CD4-positive, alpha-beta T cell (primary cell): ENCODE measurements at regions of chr17 and their contacts with region 1.

Region 1: GRCh38 chr17:66715745-66716156 is 119.2 kb upstream of the CACNG5 start:
- DNase-seq: peak in 4 of 14 experiments; percentile 4 to 60 (median 58)
- ATAC-seq: peak; percentile 48
- H3K4me3 ChIP-seq: no peak overlapping the region
- H3K4me3 Mint-ChIP-seq: no peak overlapping the region
- H3K27ac ChIP-seq: no peak overlapping the region
- H3K27ac Mint-ChIP-seq: no peak overlapping the region
- H3K4me1 ChIP-seq: peaks cover 23% of the 10 kb centered on the region
- H3K4me1 Mint-ChIP-seq: peaks cover 34% of the 10 kb centered on the region
- H3K27me3 ChIP-seq: no peaks in the 10 kb centered on the region
- H3K27me3 Mint-ChIP-seq: no peaks in the 10 kb centered on the region
- CTCF ChIP-seq: peak; percentile 66

Region 2: GRCh38 chr17:66691644-66692420 is 23.9 kb before region 1 on chr17:
- CTCF ChIA-PET with region 1: no interaction called
- POLR2A ChIA-PET with region 1: no interaction called
- intact Hi-C with region 1: no loop called
- DNase-seq: peak in 1 of 14 experiments; percentile 28
- ATAC-seq: no peak
- H3K4me3 ChIP-seq: no peak overlapping the region
- H3K4me3 Mint-ChIP-seq: no peak overlapping the region
- H3K27ac ChIP-seq: no peak overlapping the region
- H3K27ac Mint-ChIP-seq: no peak overlapping the region
- H3K4me1 ChIP-seq: peaks cover 5% of the 10 kb centered on the region
- H3K4me1 Mint-ChIP-seq: peaks cover 6% of the 10 kb centered on the region
- H3K27me3 ChIP-seq: no peaks in the 10 kb centered on the region
- H3K27me3 Mint-ChIP-seq: no peaks in the 10 kb centered on the region
- CTCF ChIP-seq: no peak

Region 3: GRCh38 chr17:67082107-67082506 is 366.4 kb after region 1 on chr17:
- CTCF ChIA-PET with region 1: no interaction called
- POLR2A ChIA-PET with region 1: no interaction called
- intact Hi-C with region 1: loop called in 1 of 2 experiments (anchors 2 kb)
- DNase-seq: peak in 3 of 14 experiments; percentile 52 to 67 (median 56)
- ATAC-seq: peak; percentile 89
- H3K4me3 ChIP-seq: no peak overlapping the region
- H3K4me3 Mint-ChIP-seq: no peak overlapping the region
- H3K27ac ChIP-seq: no peak overlapping the region
- H3K27ac Mint-ChIP-seq: peak overlapping the region; percentile 81
- H3K4me1 ChIP-seq: peaks cover 16% of the 10 kb centered on the region
- H3K4me1 Mint-ChIP-seq: peaks cover 37% of the 10 kb centered on the region
- H3K27me3 ChIP-seq: no peaks in the 10 kb centered on the region
- H3K27me3 Mint-ChIP-seq: no peaks in the 10 kb centered on the region
- CTCF ChIP-seq: no peak